SK-N-SH (cell line): ENCODE measurements at regions of chr7 and their contacts with region 1.

Region 1: DNA sequence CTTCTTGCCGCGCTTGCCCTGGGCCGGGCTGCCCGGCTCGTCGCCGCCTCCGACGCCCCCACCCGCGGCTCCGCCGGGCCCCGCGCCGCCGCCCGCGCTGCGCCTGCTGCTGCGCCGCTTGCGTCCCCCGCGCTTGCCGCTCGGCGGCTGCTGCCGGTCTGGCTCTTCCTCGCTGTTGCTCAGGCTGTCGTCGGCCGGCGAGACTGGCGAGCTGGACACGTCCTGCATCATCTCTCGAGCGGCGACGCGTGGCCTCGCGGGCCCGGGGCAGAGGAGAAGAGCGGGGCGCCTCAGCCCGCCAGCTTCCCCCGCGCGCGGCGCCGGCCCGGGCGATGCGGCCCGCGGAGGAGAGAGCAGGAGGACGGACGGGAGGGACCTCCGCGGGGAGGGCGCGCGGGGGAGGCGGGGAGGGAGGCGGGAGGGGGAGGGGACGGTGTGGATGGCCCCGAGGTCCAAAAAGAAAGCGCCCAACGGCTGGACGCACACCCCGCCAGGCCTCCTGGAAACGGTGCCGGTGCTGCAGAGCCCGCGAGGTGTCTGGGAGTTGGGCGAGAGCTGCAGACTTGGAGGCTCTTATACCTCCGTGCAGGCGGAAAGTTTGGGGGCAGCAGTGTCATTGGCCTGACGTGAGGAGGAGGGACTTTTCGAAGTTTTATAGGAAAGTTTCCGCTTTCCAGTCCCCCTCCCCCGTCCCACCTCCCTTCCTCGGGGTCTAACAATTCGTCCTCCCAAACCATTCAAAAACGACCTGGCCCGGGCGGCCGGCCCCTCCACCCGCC is at the start of gene TWIST1:
- DNase-seq: peak; percentile 96
- H3K4me3 ChIP-seq: peak within 1 kb of the TSS; percentile 92 to 100
- H3K27ac ChIP-seq: peak within 1 kb of the TSS; percentile 96 to 100
- H3K4me1 ChIP-seq: peaks cover 7 to 32% of the 10 kb centered on the region in 2 experiments; a peak in 3 of 4 replicates
- H3K27me3 ChIP-seq: no peaks in the 10 kb centered on the region
- CTCF ChIP-seq: no peak
- EP300 ChIP-seq: peak; percentile 69 to 79; a peak in 3 of 4 replicates
- RAD21 ChIP-seq: peak; percentile 18; the same call in 1 of the 2 replicates
- polyA plus RNA-seq, gene TWIST1: 162 and 170 TPM in 2 replicates

Region 2: GRCh38 chr7:18590744-18591340 is 526.4 kb before region 1 on chr7:
- CTCF ChIA-PET with region 1: interaction called, 29 read pairs
- POLR2A ChIA-PET with region 1: interaction called, 3 read pairs
- DNase-seq: peak; percentile 62
- H3K4me3 ChIP-seq: no peak overlapping the region
- H3K27ac ChIP-seq: peak overlapping the region in 1 of 2 experiments; percentile 50; a peak in 3 of 4 replicates
- H3K4me1 ChIP-seq: peaks cover 0 to 2% of the 10 kb centered on the region in 2 experiments; a peak in 1 of 4 replicates
- H3K27me3 ChIP-seq: no peaks in the 10 kb centered on the region
- CTCF ChIP-seq: peak; percentile 96
- EP300 ChIP-seq: no peak
- RAD21 ChIP-seq: peak; percentile 96

Region 3: GRCh38 chr7:18700147-18700546 is 417.1 kb before region 1 on chr7:
- CTCF ChIA-PET with region 1: interaction called, 6 read pairs
- POLR2A ChIA-PET with region 1: interaction called, 26 read pairs
- DNase-seq: no peak
- H3K4me3 ChIP-seq: no peak overlapping the region
- H3K27ac ChIP-seq: peak overlapping the region in 1 of 2 experiments; percentile 100; a peak in 2 of 4 replicates
- H3K4me1 ChIP-seq: peaks cover 0 to 61% of the 10 kb centered on the region in 2 experiments; a peak in 3 of 4 replicates
- H3K27me3 ChIP-seq: no peaks in the 10 kb centered on the region
- CTCF ChIP-seq: peak; percentile 44
- EP300 ChIP-seq: no peak
- RAD21 ChIP-seq: no peak

Region 4: GRCh38 chr7:18890134-18890533 is 227.1 kb before region 1 on chr7:
- CTCF ChIA-PET with region 1: interaction called, 8 read pairs
- POLR2A ChIA-PET with region 1: interaction called, 20 read pairs
- DNase-seq: peak; percentile 52
- H3K4me3 ChIP-seq: no peak overlapping the region
- H3K27ac ChIP-seq: peak overlapping the region; percentile 54 to 100
- H3K4me1 ChIP-seq: peaks cover 17 to 57% of the 10 kb centered on the region in 2 experiments; a peak in 3 of 4 replicates
- H3K27me3 ChIP-seq: no peaks in the 10 kb centered on the region
- CTCF ChIP-seq: no peak
- EP300 ChIP-seq: peak; percentile 96 to 100
- RAD21 ChIP-seq: peak; percentile 52

Region 5: DNA sequence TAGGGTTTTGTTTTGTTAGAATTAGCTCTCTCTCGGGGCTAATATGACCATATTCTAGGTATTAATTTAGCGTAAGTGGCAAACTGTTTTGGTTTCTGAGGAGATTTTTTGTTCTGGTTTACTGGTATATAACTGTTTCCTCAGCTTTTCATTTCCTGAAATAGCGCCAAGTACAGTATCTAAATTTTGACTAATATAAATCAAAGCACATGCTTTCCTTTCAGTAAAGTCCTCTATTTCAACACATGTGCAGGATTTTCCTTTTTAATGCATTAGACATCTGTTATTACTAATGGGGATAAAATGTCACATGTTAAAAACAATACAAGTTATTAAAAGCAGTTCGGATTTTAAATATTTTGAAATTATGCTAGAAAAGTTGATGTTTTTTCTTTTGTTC is 16.6 kb after region 1 on chr7:
- CTCF ChIA-PET with region 1: interaction called, 37 read pairs
- POLR2A ChIA-PET with region 1: no interaction called
- DNase-seq: no peak
- H3K4me3 ChIP-seq: no peak overlapping the region
- H3K27ac ChIP-seq: no peak overlapping the region
- H3K4me1 ChIP-seq: peaks cover 0 to 3% of the 10 kb centered on the region in 2 experiments; a peak in 2 of 4 replicates
- H3K27me3 ChIP-seq: no peaks in the 10 kb centered on the region
- CTCF ChIP-seq: no peak
- EP300 ChIP-seq: no peak
- RAD21 ChIP-seq: no peak